Heart left ventricle (tissue), 16 donors: ENCODE measurements at regions of chr13 and their contacts with region 1.

Region 1: DNA sequence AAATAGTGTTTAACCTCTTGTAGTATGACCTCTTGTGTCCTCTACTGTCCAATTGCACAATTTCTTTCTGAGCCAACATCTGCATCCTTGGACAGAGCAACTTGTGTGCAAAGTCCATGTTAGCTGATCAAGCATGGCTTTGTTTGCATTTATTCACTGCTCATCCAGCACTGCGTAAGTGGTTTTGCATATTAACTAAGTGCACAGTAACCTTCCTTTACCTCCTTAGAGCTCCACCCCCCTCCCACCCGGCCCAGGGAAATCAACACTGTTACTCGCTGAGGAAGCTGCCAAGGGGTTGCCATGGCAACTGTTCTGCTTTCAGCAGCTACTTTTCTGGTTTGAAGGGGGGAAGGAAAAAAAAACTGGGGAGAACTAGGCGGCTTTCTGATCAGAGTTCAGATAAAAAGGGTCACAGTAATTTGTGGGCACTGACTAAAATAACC is 153.5 kb upstream of the KLF12 start:
- DNase-seq: peak; percentile 71 to 87 (median 74)
- ATAC-seq: peak; percentile 16 to 39 (median 37)
- H3K4me3 ChIP-seq: peak overlapping the region in 10 of 12 donors; percentile 16 to 46 (median 36)
- H3K27ac ChIP-seq: peak overlapping the region in 5 of 12 donors; percentile 10 to 63 (median 56)
- H3K4me1 ChIP-seq: peaks cover 0 to 41% (median 25%) of the 10 kb centered on the region in 12 donors
- H3K27me3 ChIP-seq: no peaks in the 10 kb centered on the region
- CTCF ChIP-seq: no peak
- POLR2A ChIP-seq: no peak

Region 2: DNA sequence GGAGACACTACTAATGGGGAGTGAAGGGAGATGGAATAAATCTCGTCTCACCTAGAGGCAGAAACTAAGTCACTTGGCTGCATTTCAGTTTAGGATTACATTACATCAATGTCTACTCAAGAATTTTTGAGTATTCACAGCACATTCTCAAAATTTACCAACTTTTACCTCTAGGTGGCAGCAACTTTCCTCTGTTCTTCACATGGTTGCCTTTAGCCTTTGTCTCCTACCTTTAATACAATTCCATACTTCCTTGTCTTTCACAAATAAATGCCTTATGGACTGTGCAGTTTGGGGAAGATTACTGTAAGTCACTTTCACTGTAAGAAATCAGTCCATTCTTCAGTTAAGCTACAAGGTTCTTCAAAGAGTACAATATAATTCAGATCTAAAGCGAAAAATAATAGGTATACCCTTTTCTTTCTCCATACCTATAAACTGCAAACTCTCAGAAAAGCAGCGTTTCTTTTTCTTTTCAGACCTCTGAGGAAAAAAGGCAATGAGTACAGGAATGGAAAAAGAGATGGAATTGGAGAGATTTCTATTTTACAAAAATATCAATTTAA is 532.9 kb before region 1 on chr13:
- intact Hi-C with region 1: loop called in 9 of 10 experiments (anchors 2 to 10 kb)
- DNase-seq: peak in 1 of 5 donors; percentile 34
- ATAC-seq: peak in 3 of 4 donors; percentile 64 to 67 (median 65)
- H3K4me3 ChIP-seq: no peak overlapping the region
- H3K27ac ChIP-seq: no peak overlapping the region
- H3K4me1 ChIP-seq: peaks cover 0 to 8% (median 0%) of the 10 kb centered on the region in 12 donors
- H3K27me3 ChIP-seq: no peaks in the 10 kb centered on the region
- CTCF ChIP-seq: peak; percentile 56 to 83 (median 70)
- POLR2A ChIP-seq: no peak

Region 3: GRCh38 chr13:73835138-73835721 is 452.5 kb before region 1 on chr13:
- intact Hi-C with region 1: loop called (anchors 2 to 10 kb)
- DNase-seq: no peak
- ATAC-seq: peak in 2 of 4 donors; percentile 48 to 69
- H3K4me3 ChIP-seq: no peak overlapping the region
- H3K27ac ChIP-seq: no peak overlapping the region
- H3K4me1 ChIP-seq: peaks cover 0 to 28% (median 4%) of the 10 kb centered on the region in 12 donors
- H3K27me3 ChIP-seq: no peaks in the 10 kb centered on the region
- CTCF ChIP-seq: peak; percentile 56 to 78 (median 70)
- POLR2A ChIP-seq: no peak

Region 4: GRCh38 chr13:73938375-73939070 is 349.2 kb before region 1 on chr13:
- intact Hi-C with region 1: loop called in 6 of 10 experiments (anchors 5 to 10 kb)
- DNase-seq: no peak
- ATAC-seq: peak in 1 of 4 donors; percentile 44
- H3K4me3 ChIP-seq: no peak overlapping the region
- H3K27ac ChIP-seq: no peak overlapping the region
- H3K4me1 ChIP-seq: peaks cover 0 to 42% (median 15%) of the 10 kb centered on the region in 12 donors
- H3K27me3 ChIP-seq: no peaks in the 10 kb centered on the region
- CTCF ChIP-seq: no peak
- POLR2A ChIP-seq: no peak

Region 5: GRCh38 chr13:74026753-74027152 is 261.0 kb before region 1 on chr13:
- intact Hi-C with region 1: loop called in 3 of 10 experiments (anchors 5 to 10 kb)
- DNase-seq: no peak
- ATAC-seq: peak in 1 of 4 donors; percentile 23
- H3K4me3 ChIP-seq: no peak overlapping the region
- H3K27ac ChIP-seq: peak overlapping the region in 1 of 12 donors; percentile 54
- H3K4me1 ChIP-seq: peaks cover 0 to 44% (median 27%) of the 10 kb centered on the region in 12 donors
- H3K27me3 ChIP-seq: no peaks in the 10 kb centered on the region
- CTCF ChIP-seq: no peak
- POLR2A ChIP-seq: no peak

Region 6: DNA sequence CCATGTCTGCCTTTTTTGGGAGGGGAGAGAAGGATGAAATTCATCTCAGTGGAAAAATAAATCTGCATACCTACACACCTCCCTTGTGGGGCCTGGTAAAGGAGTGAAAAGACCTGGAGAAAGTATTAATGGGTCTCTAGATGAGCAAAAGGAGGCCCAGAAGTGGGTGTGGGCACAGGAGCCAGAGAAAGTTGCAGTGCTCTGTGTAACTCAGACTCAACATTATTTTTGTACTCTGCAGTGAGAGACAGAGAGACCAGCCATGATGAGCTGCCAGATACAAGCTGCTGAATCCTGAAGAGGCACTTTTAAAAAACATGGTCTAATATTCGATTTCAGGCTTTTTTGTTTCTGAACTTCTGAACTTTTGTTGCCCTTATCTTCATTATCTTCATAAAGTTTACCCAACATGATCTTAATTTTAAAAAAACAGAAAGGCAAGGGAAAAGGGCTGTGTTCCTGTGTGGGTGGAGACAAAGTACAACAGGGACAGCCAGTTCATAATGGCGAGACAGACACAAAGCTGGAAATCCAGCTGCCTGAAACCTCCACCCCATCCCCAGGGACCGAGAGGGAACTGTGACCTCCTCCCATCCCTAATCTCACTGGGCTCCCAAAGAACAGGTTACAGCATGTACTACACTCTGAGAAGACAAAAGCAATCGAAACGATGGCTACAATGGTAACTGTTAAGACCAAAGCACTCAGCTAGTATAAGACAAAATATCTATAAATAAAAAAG is 230.8 kb before region 1 on chr13:
- intact Hi-C with region 1: no loop called
- DNase-seq: peak; percentile 62 to 86 (median 82)
- ATAC-seq: peak; percentile 92 to 96 (median 94)
- H3K4me3 ChIP-seq: peak overlapping the region in 4 of 12 donors; percentile 6 to 14 (median 8)
- H3K27ac ChIP-seq: peak overlapping the region; percentile 41 to 85 (median 70)
- H3K4me1 ChIP-seq: peaks cover 5 to 74% (median 40%) of the 10 kb centered on the region in 12 donors
- H3K27me3 ChIP-seq: no peaks in the 10 kb centered on the region
- CTCF ChIP-seq: peak in 1 of 12 donors; percentile 11
- POLR2A ChIP-seq: no peak

Region 7: DNA sequence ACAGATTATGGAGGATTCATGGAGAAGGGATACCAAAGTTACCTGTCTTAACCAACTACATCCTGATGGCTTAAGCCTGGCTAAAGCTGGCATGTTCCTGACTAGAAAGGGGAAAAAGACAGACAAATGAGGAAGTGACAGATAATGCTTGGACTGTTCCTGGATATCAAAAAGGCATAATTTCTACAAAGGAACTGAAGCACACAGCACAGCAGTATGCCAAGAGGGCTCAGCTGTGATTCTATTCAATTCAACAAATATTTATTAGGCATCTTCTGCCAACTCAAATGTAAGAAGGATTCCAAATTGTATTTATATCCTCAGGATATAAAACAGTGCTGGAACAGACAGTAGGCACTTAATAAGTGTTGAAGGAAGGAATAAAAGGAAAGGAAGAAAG is 213.0 kb before region 1 on chr13:
- intact Hi-C with region 1: no loop called
- DNase-seq: no peak
- ATAC-seq: peak in 2 of 4 donors; percentile 30 to 31
- H3K4me3 ChIP-seq: no peak overlapping the region
- H3K27ac ChIP-seq: no peak overlapping the region
- H3K4me1 ChIP-seq: peaks cover 0 to 61% (median 34%) of the 10 kb centered on the region in 12 donors
- H3K27me3 ChIP-seq: no peaks in the 10 kb centered on the region
- CTCF ChIP-seq: no peak
- POLR2A ChIP-seq: no peak

Region 8: GRCh38 chr13:74145249-74145975 is 142.3 kb before region 1 on chr13:
- intact Hi-C with region 1: loop called in 1 of 10 experiments (anchors 5 kb)
- DNase-seq: no peak
- ATAC-seq: peak in 2 of 4 donors; percentile 47 to 60
- H3K4me3 ChIP-seq: no peak overlapping the region
- H3K27ac ChIP-seq: no peak overlapping the region
- H3K4me1 ChIP-seq: peaks cover 0 to 16% (median 8%) of the 10 kb centered on the region in 12 donors
- H3K27me3 ChIP-seq: no peaks in the 10 kb centered on the region
- CTCF ChIP-seq: no peak
- POLR2A ChIP-seq: no peak